ENCODE measurements at regions of chr12 and their contacts with region 1.

Region 1: GRCh38 chr12:62793256-62794217 is 141.4 kb downstream of the PPM1H start:
- DNase-seq: peak; percentile 83
- H3K4me3 Mint-ChIP-seq: no peak overlapping the region
- H3K27ac Mint-ChIP-seq: no peak overlapping the region
- H3K4me1 Mint-ChIP-seq: no peaks in the 10 kb centered on the region
- H3K27me3 Mint-ChIP-seq: no peaks in the 10 kb centered on the region

Region 2: DNA sequence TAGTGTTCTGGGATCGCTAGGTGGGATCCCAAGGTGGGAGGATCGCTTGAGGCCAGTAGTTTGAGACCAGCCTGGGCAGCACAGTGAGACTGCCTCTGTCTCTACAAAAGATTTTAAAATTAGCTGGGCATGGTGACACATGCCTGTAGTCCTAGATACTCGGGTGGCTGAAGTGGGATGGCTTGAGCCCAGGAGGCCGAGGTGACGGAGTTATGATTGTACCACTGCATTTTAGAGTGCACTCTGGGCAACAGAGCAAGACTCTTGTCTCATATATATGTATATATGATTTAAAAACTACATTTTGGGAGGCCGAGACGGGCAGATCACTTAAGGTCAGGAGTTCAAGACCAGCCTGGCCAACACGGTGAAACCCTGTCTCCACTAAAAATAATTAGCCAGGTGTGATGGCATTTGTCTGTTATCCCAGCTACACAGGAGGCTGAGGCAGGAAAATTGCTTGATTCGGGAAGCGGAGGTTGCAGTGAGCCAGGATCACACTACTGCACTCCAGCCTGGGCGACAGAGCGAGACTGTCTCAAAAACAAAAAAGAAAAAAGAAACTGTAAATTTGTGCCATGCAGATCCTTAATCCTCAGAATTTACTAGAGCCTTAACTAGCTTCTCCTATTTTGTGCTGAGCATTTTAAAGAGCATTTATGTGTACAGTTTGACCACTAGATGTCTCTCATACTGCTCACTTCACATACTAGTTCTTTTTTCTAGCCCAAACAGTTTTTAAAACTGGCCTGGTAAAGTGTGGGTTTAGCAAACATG is 212.1 kb before region 1 on chr12:
- CTCF ChIA-PET with region 1: interaction called, 96 read pairs
- intact Hi-C with region 1: loop called (anchors 1 kb)
- DNase-seq: no peak
- H3K4me3 Mint-ChIP-seq: no peak overlapping the region
- H3K27ac Mint-ChIP-seq: no peak overlapping the region
- H3K4me1 Mint-ChIP-seq: no peaks in the 10 kb centered on the region
- H3K27me3 Mint-ChIP-seq: no peaks in the 10 kb centered on the region

Region 3: GRCh38 chr12:62660756-62661155 is 132.8 kb before region 1 on chr12:
- CTCF ChIA-PET with region 1: no interaction called
- intact Hi-C with region 1: no loop called
- DNase-seq: no peak
- H3K4me3 Mint-ChIP-seq: no peak overlapping the region
- H3K27ac Mint-ChIP-seq: no peak overlapping the region
- H3K4me1 Mint-ChIP-seq: no peaks in the 10 kb centered on the region
- H3K27me3 Mint-ChIP-seq: peaks cover 4% of the 10 kb centered on the region

Region 4: DNA sequence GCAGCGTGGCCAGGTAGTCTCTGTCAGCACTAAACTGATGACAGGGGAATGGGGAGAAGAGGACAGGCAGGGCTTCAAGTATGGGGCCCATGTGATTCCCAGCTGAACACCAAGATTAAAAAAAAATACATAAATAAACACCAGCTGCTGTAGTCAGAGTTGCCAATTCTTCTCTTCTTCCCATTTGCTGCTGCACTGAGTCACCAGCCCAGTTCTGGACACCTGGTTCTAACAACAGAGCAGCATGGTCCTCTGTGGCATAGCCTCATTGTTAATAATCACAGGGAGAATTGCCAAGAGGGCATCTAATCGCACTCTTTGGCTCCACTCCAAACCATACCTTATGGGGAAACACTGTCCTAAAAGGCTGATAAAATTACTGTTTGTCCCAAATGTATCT is 126.3 kb after region 1 on chr12:
- CTCF ChIA-PET with region 1: no interaction called
- intact Hi-C with region 1: no loop called
- DNase-seq: no peak
- H3K4me3 Mint-ChIP-seq: no peak overlapping the region
- H3K27ac Mint-ChIP-seq: no peak overlapping the region
- H3K4me1 Mint-ChIP-seq: no peaks in the 10 kb centered on the region
- H3K27me3 Mint-ChIP-seq: no peaks in the 10 kb centered on the region

Measured in activated naive CD4-positive, alpha-beta T cell treated with anti-CD3 and anti-CD28 coated beads for 36 hours (primary cell).